RWPE1 (cell line): ENCODE measurements at regions of chr14 and their contacts with region 1.

Region 1: GRCh38 chr14:22852940-22853767 is 16.8 kb downstream of the MMP14 start:
- DNase-seq: peak; percentile 51
- H3K27ac ChIP-seq: peak overlapping the region; percentile 99
- CTCF ChIP-seq: peak; percentile 91

Region 2: DNA sequence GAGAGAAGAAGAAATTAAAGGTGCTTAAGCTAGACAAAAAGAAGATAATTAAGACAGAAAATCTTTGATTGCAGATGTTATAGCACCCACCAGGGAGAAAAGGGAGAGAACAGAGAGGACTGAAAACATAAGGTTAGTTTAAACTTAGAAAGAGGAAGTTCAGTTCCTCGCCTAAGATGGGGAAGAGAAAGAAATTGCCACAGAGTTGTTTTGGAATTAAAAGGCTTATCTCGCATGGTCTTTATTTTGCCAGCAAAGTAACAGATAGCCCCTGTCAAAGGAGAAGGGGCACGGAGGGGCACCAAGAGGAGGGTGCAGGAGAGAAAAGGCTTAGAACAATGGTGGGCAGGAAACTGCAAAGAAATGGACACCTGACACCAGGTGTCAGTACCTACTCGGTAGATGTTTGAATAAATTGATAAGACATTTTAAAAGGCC is 104.5 kb before region 1 on chr14:
- CTCF ChIA-PET with region 1: no interaction called
- POLR2A ChIA-PET with region 1: no interaction called
- DNase-seq: no peak
- H3K27ac ChIP-seq: no peak overlapping the region
- CTCF ChIP-seq: no peak

Region 3: DNA sequence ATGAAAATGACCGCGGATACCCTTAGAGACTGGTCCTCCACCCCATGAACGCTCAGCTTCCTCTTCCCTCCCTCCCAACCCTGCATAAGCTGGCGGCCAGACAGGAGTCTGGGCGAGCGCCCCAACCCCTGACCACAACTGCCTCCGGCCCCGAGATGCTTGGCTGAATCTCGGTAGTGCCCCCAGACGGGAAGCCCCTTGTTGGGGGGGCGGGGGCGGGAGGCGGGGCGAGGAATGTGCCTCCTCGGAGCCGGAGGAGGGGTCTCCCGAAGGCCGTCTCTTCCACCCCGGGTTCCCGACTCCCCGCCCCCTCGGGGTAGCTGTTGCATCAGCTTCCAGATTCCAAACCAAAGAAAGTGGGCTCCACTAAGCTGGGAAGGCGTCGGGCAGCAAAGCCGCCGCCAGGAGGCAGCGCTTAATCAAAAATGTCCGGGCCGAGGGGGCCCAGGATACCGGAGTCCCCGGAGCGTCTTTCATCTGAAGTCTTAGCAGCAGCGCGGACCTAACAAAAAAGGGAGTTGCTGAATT is 30.5 kb before region 1 on chr14:
- CTCF ChIA-PET with region 1: interaction called, 37 read pairs
- POLR2A ChIA-PET with region 1: interaction called, 7 read pairs
- DNase-seq: no peak
- H3K27ac ChIP-seq: peak overlapping the region; percentile 61
- CTCF ChIP-seq: peak; percentile 76

Region 4: DNA sequence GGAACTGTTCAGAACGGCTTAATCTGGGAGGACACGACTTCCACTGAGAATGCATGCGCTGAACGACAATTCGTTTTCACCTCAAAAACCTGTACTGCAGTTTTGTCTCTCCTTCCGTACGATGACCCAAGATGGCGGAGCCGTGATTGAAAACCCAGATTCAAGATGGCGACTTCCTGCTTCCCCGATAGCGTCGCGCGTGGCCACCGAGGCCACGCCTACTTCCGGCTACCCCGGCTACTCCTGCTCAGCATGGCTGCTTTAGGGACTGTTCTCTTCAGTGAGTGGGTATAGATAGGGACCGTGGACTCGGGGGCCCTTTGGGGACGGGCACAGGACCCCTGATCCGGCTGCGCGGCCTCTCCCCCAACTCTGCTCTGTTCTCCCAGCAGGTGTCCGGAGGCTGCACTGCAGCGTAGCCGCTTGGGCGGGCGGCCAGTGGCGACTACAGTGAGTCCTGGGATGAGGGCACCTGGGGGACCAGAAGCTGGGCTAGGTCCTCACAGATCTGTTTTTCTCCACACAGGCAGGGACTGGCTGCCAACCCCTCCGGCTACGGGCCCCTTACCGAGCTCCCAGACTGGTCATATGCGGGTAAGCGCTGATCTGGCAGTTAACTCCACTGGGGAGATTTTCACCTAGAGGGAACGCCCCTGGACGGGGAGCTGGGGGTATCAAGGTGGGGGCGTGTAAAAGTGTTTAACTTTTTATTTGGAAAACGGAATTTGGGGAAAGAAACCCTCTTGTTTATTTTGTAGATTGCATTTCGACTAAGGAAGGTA is 23.3 kb before region 1 on chr14 and contains the start of gene MRPL52:
- CTCF ChIA-PET with region 1: interaction called, 11 read pairs
- POLR2A ChIA-PET with region 1: interaction called, 3 read pairs
- DNase-seq: peak; percentile 79
- H3K27ac ChIP-seq: peak within 1 kb of the TSS; percentile 76
- CTCF ChIP-seq: no peak

Region 5: GRCh38 chr14:22836301-22837113 is 16.6 kb before region 1 on chr14 and contains the start of gene MMP14:
- CTCF ChIA-PET with region 1: interaction called, 18 read pairs
- POLR2A ChIA-PET with region 1: interaction called, 19 read pairs
- DNase-seq: peak; percentile 59
- H3K27ac ChIP-seq: peak within 1 kb of the TSS; percentile 99
- CTCF ChIP-seq: no peak; the same call in 1 of the 2 replicates

Region 6: GRCh38 chr14:22865424-22866405 is 12.6 kb after region 1 on chr14:
- CTCF ChIA-PET with region 1: interaction called, 15 read pairs
- POLR2A ChIA-PET with region 1: no interaction called
- DNase-seq: no peak
- H3K27ac ChIP-seq: no peak overlapping the region
- CTCF ChIP-seq: no peak